Mammary epithelial cell (primary cell): ENCODE measurements at regions of chr11 and their contacts with region 1.

Region 1: GRCh38 chr11:64846998-64847666 is 2.7 kb upstream of the CDC42BPG start:
- DNase-seq: peak; percentile 79
- H3K4me3 ChIP-seq: no peak overlapping the region
- H3K27ac ChIP-seq: no peak overlapping the region
- H3K4me1 ChIP-seq: peaks cover 50% of the 10 kb centered on the region
- H3K27me3 ChIP-seq: no peaks in the 10 kb centered on the region
- CTCF ChIP-seq: peak; percentile 73 to 95

Region 2: GRCh38 chr11:64787526-64788320 is 59.4 kb before region 1 on chr11:
- CTCF ChIA-PET with region 1: no interaction called
- dilution Hi-C with region 1: loop called (anchors 5 kb)
- in situ Hi-C with region 1: no loop called
- intact Hi-C with region 1: loop called (anchors 1 kb)
- DNase-seq: peak; percentile 25
- H3K4me3 ChIP-seq: no peak overlapping the region
- H3K27ac ChIP-seq: no peak overlapping the region
- H3K4me1 ChIP-seq: no peaks in the 10 kb centered on the region
- H3K27me3 ChIP-seq: no peaks in the 10 kb centered on the region
- CTCF ChIP-seq: peak; percentile 81 to 92

Region 3: DNA sequence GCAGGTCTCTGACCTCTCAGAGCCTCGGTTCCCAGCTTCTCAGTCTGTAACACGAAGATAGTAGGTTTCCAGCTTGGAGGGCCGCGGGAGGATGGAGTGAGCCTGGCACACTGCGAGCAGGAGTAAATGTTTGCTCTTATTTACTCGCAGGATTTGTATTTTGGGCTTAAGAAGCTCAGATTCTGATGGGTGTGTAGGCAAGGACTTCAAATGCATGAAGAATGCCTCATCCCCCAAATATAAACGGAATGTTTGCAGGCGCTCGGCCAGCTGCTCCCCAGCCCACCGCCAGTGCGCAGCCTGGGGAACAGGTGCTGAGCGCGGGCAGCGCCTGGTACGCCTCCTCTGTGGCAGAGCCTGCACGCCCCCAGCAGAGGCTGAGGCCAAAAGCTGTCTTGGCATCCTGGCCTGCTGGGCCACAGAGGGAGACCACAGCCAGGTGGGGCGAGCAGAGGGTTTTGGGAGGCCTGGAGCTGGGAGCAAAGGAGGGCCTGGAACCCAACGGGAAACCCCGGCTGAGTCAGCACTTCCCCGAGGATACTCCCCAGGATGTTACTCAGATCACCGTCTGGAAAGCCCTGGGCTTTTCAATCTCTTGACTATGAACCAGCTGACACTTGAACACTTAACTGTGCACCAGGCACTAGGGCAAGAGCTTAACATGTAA is 21.9 kb after region 1 on chr11:
- CTCF ChIA-PET with region 1: interaction called, 5 read pairs
- dilution Hi-C with region 1: no loop called
- in situ Hi-C with region 1: no loop called
- intact Hi-C with region 1: loop called (anchors 1 kb)
- DNase-seq: peak; percentile 96
- H3K4me3 ChIP-seq: no peak overlapping the region
- H3K27ac ChIP-seq: peak overlapping the region; percentile 72
- H3K4me1 ChIP-seq: peaks cover 68% of the 10 kb centered on the region
- H3K27me3 ChIP-seq: no peaks in the 10 kb centered on the region
- CTCF ChIP-seq: no peak

Region 4: GRCh38 chr11:64894070-64894796 is 47.1 kb after region 1 on chr11:
- CTCF ChIA-PET with region 1: no interaction called
- dilution Hi-C with region 1: loop called (anchors 5 kb)
- in situ Hi-C with region 1: loop called (anchors 5 kb)
- intact Hi-C with region 1: loop called (anchors 1 kb)
- DNase-seq: peak; percentile 39
- H3K4me3 ChIP-seq: no peak overlapping the region
- H3K27ac ChIP-seq: no peak overlapping the region
- H3K4me1 ChIP-seq: no peaks in the 10 kb centered on the region
- H3K27me3 ChIP-seq: no peaks in the 10 kb centered on the region
- CTCF ChIP-seq: peak; percentile 79 to 92

Region 5: GRCh38 chr11:64996710-64997380 is 149.7 kb after region 1 on chr11 and contains the start of gene BATF2:
- CTCF ChIA-PET with region 1: interaction called, 3 read pairs
- dilution Hi-C with region 1: no loop called
- in situ Hi-C with region 1: no loop called
- intact Hi-C with region 1: loop called (anchors 1 kb)
- DNase-seq: peak; percentile 60
- H3K4me3 ChIP-seq: peak within 1 kb of the TSS in 1 of 3 experiments; percentile 3
- H3K27ac ChIP-seq: no peak within 1 kb of the TSS
- H3K4me1 ChIP-seq: no peaks in the 10 kb centered on the region
- H3K27me3 ChIP-seq: no peaks in the 10 kb centered on the region
- CTCF ChIP-seq: peak; percentile 21 to 56
- total RNA-seq, gene BATF2: 1.3 to 2.4 TPM

Region 6: DNA sequence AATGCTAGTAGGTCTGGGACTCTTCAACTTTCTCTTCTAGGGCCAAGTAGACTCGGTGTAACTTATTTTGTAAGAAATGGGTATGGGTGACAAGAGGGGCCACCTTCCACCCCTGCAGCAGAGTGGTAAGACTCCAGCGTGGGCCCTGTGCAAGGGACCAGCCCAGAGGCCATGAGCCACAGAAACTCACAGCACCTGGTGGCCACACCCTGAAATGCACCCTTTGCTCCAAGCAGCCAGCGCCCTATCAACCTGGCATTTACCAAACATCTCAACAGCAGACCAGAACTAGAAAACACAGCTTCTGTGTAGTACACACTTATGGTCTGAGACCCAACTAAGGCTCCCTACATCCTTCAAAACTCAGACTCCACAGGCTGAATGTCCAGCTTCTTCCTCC is 231.0 kb after region 1 on chr11:
- CTCF ChIA-PET with region 1: no interaction called
- dilution Hi-C with region 1: no loop called
- in situ Hi-C with region 1: no loop called
- intact Hi-C with region 1: loop called (anchors 1 kb)
- DNase-seq: peak; percentile 14
- H3K4me3 ChIP-seq: no peak overlapping the region
- H3K27ac ChIP-seq: no peak overlapping the region
- H3K4me1 ChIP-seq: peaks cover 30% of the 10 kb centered on the region
- H3K27me3 ChIP-seq: no peaks in the 10 kb centered on the region
- CTCF ChIP-seq: peak; percentile 72 to 75

Region 7: GRCh38 chr11:65251476-65251875 is 404.3 kb after region 1 on chr11:
- CTCF ChIA-PET with region 1: no interaction called
- dilution Hi-C with region 1: no loop called
- in situ Hi-C with region 1: no loop called
- intact Hi-C with region 1: loop called (anchors 5 kb)
- DNase-seq: no peak
- H3K4me3 ChIP-seq: no peak overlapping the region
- H3K27ac ChIP-seq: no peak overlapping the region
- H3K4me1 ChIP-seq: no peaks in the 10 kb centered on the region
- H3K27me3 ChIP-seq: no peaks in the 10 kb centered on the region
- CTCF ChIP-seq: no peak